Activated CD8-positive, alpha-beta T cell treated with anti-CD3 and anti-CD28 coated beads for 36 hours (primary cell): ENCODE measurements at regions of chr6 and their contacts with region 1.

Region 1: DNA sequence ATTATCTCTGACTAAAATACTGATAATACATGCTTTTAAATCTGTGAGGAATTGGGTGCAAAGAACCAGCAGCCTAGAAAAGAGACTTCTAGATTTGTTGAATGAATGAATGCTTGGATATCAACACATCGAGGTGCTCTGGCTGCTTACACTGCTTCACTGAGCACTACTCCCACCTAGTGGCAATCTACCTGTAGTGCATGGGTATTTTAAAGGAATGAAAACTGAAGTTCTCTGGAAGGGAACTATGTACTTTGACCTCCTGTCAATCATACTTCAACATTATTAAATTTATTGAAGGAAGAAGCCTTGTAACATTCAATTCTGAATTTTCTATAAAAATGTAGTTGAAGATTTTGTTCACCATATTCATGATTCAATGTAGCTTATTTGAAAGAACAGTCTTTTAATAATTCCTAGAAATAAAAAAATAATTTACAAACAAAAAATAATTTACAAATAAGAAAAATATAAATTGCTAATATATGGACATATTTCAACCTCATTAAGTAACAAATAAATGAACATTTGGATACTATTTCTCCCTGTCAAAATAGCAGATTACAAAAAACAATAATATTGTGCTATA is 111.2 kb upstream of the MMS22L start:
- DNase-seq: peak; percentile 60
- ATAC-seq: peak; percentile 94
- H3K4me3 Mint-ChIP-seq: no peak overlapping the region
- H3K27ac Mint-ChIP-seq: no peak overlapping the region
- H3K4me1 Mint-ChIP-seq: no peaks in the 10 kb centered on the region
- H3K27me3 Mint-ChIP-seq: peaks cover 8% of the 10 kb centered on the region
- CTCF ChIP-seq: peak; percentile 93

Region 2: GRCh38 chr6:97068211-97068610 is 326.0 kb before region 1 on chr6:
- CTCF ChIA-PET with region 1: interaction called, 6 read pairs
- POLR2A ChIA-PET with region 1: no interaction called
- intact Hi-C with region 1: loop called (anchors 1 kb)
- DNase-seq: peak; percentile 36
- ATAC-seq: no peak
- H3K4me3 Mint-ChIP-seq: no peak overlapping the region
- H3K27ac Mint-ChIP-seq: no peak overlapping the region
- H3K4me1 Mint-ChIP-seq: peaks cover 8% of the 10 kb centered on the region
- H3K27me3 Mint-ChIP-seq: no peaks in the 10 kb centered on the region
- CTCF ChIP-seq: peak; percentile 85